ENCODE measurements at regions of chr16 and their contacts with region 1.

Region 1: DNA sequence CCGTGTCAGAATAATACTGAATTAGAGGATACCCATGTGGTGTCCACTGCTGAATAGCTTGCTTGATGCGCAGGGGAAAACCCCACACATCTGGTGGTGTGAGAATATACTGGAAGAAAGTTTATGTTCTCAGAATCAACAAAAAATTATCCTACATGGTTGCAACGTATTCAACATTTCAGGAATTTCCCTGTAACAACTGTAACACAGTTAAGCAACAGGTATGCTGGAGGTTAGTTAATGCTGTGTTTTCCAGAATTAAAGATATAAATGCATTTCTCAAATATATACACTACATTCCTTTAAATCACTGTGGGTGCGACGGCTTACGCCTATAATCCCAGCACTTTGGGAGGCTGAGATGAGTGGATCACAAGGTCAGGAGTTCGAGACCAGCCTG is 5.4 kb downstream of the CNOT1 start:
- DNase-seq: no peak
- H3K4me3 ChIP-seq: no peak overlapping the region
- H3K27ac ChIP-seq: no peak overlapping the region
- H3K4me1 ChIP-seq: peaks cover 5% of the 10 kb centered on the region
- H3K27me3 ChIP-seq: no peaks in the 10 kb centered on the region
- CTCF ChIP-seq: no peak
- EP300 ChIP-seq: no peak
- POLR2A ChIP-seq: no peak

Region 2: DNA sequence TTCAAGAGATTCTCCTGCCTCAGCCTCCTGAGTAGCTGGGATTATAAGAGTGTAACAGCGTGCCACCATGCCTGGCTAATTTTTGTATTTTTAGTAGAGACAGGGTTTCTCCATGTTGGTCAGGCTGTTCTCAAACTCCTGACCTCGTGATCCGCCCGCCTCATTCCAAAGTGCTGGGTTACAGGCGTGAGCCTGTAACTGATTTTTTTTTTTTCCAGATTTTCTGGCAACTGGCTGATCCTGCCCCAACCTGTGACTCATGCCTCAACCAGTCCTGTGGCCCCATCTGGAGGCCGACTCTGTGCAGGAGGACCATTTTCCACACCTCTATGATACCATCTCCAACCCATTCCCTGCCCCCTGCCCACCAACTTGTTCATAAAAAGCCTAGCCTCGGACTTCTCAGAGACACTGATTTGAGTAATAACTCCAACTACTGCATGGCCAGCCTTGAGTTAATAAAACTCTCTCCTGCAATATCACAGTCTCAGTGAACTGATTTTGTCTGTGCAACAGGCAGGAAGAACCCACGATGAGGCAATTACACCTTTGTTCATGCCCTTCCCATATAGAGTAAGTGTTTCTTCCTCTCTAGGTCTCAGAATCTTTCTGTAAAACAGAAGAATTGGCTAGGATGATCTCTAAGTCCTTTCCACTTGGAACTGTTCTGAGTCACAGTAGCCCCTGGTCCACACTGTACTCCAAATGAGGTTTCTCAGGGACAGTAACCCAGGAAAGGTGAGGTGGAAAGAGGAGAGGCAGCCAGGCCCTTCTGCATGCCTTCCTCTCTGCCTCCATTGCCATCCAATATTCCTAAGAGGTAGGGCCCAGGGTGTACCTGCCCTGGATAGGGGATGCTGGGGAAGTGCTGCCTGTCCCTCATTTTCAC is 14.2 kb after region 1 on chr16:
- intact Hi-C with region 1: loop called in 1 of 4 experiments (anchors 1 kb)
- DNase-seq: peak in 3 of 5 donors; percentile 25 to 58 (median 39)
- H3K4me3 ChIP-seq: no peak overlapping the region
- H3K27ac ChIP-seq: no peak overlapping the region
- H3K4me1 ChIP-seq: no peaks in the 10 kb centered on the region
- H3K27me3 ChIP-seq: no peaks in the 10 kb centered on the region
- CTCF ChIP-seq: no peak
- EP300 ChIP-seq: no peak
- POLR2A ChIP-seq: no peak